ENCODE measurements at regions of chr14 and their contacts with region 1.

Region 1: GRCh38 chr14:86654558-86655184 is 1124.7 kb downstream of the FLRT2 start:
- DNase-seq: peak; percentile 32 to 88 (median 62)
- ATAC-seq: peak; percentile 60 to 78 (median 68)
- H3K4me3 ChIP-seq: no peak overlapping the region
- H3K27ac ChIP-seq: no peak overlapping the region
- H3K4me1 ChIP-seq: no peaks in the 10 kb centered on the region
- H3K27me3 ChIP-seq: no peaks in the 10 kb centered on the region
- CTCF ChIP-seq: peak; percentile 25 to 49 (median 37)

Region 2: GRCh38 chr14:86450085-86450484 is 204.6 kb before region 1 on chr14:
- intact Hi-C with region 1: loop called in 1 of 3 experiments (anchors 10 kb)
- DNase-seq: no peak
- ATAC-seq: no peak
- H3K4me3 ChIP-seq: no peak overlapping the region
- H3K27ac ChIP-seq: no peak overlapping the region
- H3K4me1 ChIP-seq: no peaks in the 10 kb centered on the region
- H3K27me3 ChIP-seq: no peaks in the 10 kb centered on the region
- CTCF ChIP-seq: no peak

Measured in pancreas (tissue), 10 donors.